Activated T-helper 2 cell treated with anti-CD3 and anti-CD28 coated beads, Interferon-gamma antibody, Interleukin-2, Interleukin-4, amounts not matched to agents 10 μg/mL and 5 μg/mL and 100 μg/mL, durations not matched to agents 14 hours and 24 hours and 36 hours (primary cell): ENCODE measurements at regions of chr10 and their contacts with region 1.

Region 1: DNA sequence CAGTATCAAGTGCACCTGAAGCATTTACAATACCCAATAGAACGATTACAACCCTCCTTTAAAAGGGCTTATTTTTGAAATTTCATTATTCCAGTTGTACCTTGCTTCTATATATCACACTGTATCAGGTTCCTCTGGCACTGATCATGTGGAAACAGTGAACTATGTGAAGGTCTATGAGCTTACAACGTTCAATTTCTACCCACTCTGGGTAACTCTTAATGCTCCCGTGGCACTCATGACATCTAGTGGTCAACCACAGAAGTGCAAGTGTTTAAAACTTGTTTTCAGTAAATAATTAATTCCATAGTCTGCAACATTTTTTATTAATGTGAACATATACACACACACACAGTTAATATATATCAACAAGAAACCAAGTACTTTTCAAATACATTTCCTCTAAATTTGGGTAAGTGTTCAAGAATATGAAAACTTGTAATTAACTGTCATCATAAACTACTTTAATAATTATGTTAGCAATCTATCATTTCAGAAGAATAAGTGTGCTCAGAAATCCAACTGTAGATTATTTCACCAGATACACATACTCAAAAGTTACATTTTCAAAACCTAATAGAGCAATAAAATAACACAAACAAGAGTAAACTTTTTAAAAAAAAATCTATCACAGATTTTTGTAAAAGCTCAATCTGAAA is 61.0 kb downstream of the MPP7 start:
- DNase-seq: no peak
- H3K4me3 Mint-ChIP-seq: no peak overlapping the region
- H3K27ac Mint-ChIP-seq: no peak overlapping the region
- H3K4me1 Mint-ChIP-seq: peaks cover 3% of the 10 kb centered on the region
- H3K27me3 Mint-ChIP-seq: peaks cover 13% of the 10 kb centered on the region

Region 2: DNA sequence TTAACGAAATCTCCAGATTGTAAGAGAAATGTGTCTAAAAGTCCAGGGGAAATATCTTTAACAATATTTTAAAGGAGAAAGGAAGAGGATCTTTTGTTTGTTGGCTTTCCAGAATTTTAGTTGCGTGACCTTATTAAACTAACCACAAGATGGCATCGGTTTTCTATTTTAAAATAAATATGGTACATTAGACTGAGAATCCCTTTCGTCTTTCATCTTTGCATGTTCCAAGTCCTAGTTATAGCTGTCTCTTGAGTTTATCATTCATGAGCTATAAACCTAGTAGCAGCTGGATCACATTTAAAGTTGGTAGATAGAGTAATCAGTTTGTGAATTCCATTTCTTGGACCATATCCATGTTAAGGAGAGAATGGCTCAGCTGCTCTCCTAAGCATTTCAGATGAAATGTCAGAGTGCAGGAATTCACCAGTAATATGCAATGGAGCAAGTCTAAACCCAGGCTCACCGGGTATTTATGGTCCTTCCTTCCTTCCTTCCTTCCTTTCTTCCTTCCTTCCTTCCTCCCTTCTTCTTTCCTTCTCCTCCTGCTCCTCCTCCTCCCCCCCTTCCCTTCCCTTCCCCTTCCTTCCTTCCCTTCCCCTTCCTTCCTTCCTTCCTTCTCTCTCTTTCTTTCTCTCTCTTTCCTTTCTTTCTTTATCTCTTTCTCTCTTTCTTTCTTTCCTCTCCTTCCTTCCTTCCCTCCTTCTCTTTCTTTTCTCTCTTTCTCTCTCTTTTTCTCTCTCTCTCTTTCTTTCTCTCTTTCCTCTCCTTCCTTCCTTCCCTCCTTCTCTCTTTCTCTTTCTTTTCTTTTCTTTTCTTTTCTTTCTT is 795.6 kb before region 1 on chr10:
- intact Hi-C with region 1: loop called (anchors 5 kb)
- DNase-seq: no peak
- H3K4me3 Mint-ChIP-seq: no peak overlapping the region
- H3K27ac Mint-ChIP-seq: no peak overlapping the region
- H3K4me1 Mint-ChIP-seq: peaks cover 5% of the 10 kb centered on the region
- H3K27me3 Mint-ChIP-seq: peaks cover 3% of the 10 kb centered on the region

Region 3: DNA sequence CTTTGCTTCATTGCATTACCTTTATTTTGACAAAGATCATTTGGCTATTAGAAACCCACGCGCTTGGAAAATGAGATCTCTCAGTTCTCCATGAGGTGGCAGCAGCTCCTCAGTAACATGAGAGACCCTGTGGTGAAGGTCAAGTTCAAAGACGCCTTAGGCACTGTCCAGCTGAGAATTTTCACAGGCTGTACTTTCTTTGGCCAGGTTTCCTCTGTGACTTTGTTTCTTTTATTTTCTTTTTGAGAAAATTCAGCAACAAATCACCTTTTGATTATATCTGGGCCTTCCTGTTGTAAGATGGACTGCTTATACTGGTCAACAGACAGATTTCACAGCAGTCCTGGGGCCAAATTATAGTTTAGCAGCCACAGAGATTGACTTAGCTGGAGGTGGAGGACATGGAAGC is 683.3 kb before region 1 on chr10:
- intact Hi-C with region 1: loop called (anchors 10 kb)
- DNase-seq: peak; percentile 19
- H3K4me3 Mint-ChIP-seq: no peak overlapping the region
- H3K27ac Mint-ChIP-seq: no peak overlapping the region
- H3K4me1 Mint-ChIP-seq: no peaks in the 10 kb centered on the region
- H3K27me3 Mint-ChIP-seq: peaks cover 6% of the 10 kb centered on the region

Region 4: GRCh38 chr10:28202941-28203352 is 38.9 kb before region 1 on chr10:
- intact Hi-C with region 1: no loop called
- DNase-seq: no peak
- H3K4me3 Mint-ChIP-seq: no peak overlapping the region
- H3K27ac Mint-ChIP-seq: no peak overlapping the region
- H3K4me1 Mint-ChIP-seq: no peaks in the 10 kb centered on the region
- H3K27me3 Mint-ChIP-seq: no peaks in the 10 kb centered on the region